ENCODE measurements at regions of chr2 and their contacts with region 1.

Region 1: GRCh38 chr2:58762176-58762781 is 521.2 kb upstream of the FANCL start:
- DNase-seq: peak in 2 of 3 donors; percentile 42 to 49
- ATAC-seq: peak; percentile 52
- H3K4me3 ChIP-seq: no peak overlapping the region
- H3K4me1 ChIP-seq: no peaks in the 10 kb centered on the region
- CTCF ChIP-seq: no peak

Region 2: DNA sequence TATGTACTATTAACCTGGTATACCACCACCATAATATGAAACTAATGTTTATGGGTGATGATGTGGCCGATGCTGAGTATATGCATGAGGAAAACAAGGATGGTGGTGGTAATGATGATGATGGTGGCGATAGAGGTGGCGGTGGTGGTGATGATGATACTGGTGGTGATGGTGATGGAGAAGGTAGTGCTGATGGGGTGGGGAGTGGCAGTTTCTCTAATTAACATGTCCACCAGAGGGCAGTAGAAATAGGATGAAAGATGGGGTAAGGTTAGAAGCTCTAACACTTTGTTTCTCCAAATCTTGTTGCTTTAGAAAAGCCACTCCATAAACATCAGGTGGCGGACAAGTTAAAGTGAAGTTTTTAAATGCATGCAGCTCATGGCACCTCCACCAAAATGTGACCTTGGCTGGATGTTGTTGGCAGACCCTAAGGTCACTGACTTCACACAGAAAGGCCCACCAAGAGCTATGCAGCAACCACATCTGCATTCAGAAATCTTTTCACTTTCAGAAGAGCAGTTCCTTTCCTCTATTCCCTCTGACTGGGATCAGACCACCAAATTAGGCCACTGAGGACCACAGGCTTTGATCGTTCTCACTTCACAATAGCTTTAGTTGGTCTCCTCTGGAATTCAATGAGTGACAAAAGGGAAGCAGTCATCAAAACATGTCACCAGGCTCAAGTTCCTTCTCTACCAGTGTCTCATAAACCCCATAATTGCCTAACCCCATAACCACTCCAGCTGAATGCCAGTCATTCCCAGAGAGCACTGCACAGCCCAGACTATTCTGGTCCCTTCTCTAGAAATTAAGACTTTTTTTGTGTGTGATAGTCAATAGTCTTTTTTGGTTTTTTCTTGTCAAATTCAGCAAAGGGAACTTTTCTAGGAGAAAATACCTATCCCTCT is 1798.7 kb after region 1 on chr2:
- intact Hi-C with region 1: loop called in 1 of 2 experiments (anchors 10 kb)
- DNase-seq: no peak
- ATAC-seq: peak; percentile 70
- H3K4me3 ChIP-seq: no peak overlapping the region
- H3K4me1 ChIP-seq: peaks cover 7% of the 10 kb centered on the region
- CTCF ChIP-seq: peak; percentile 23

Measured in mucosa of descending colon (tissue), 3 donors.